Heart left ventricle (tissue), 16 donors: ENCODE measurements at regions of chr7 and their contacts with region 1.

Region 1: DNA sequence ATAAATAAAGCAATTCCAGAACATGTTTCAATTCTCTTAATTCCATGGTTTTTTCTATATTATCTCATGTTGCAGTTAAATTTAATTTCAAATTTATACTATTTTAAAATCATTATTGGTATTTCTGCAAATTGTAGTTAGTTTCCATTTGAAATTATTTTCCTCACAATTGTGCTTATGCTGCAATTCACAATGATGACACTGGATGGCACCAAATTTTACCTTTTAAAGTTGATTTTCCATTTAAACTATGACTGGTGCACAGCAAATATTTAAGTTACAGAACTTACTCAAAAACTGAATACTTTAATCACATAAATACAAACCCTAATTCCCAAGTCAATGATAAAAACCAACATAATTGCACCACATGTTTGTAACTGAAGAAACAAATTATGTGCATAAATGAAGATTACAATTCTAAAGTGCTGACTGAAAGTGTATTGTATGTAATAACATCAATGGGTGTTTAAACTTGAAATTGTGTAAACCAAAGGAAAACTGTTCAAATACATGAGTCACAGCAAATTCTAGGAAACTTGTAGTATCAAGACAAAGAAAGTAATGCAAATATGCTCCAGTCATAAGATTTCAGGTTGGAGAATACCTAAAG is 75.3 kb upstream of the AASS start:
- DNase-seq: no peak
- ATAC-seq: no peak
- H3K4me3 ChIP-seq: no peak overlapping the region
- H3K27ac ChIP-seq: no peak overlapping the region
- H3K4me1 ChIP-seq: no peaks in the 10 kb centered on the region
- H3K27me3 ChIP-seq: no peaks in the 10 kb centered on the region
- CTCF ChIP-seq: peak; percentile 36 to 70 (median 60)
- POLR2A ChIP-seq: no peak

Region 2: DNA sequence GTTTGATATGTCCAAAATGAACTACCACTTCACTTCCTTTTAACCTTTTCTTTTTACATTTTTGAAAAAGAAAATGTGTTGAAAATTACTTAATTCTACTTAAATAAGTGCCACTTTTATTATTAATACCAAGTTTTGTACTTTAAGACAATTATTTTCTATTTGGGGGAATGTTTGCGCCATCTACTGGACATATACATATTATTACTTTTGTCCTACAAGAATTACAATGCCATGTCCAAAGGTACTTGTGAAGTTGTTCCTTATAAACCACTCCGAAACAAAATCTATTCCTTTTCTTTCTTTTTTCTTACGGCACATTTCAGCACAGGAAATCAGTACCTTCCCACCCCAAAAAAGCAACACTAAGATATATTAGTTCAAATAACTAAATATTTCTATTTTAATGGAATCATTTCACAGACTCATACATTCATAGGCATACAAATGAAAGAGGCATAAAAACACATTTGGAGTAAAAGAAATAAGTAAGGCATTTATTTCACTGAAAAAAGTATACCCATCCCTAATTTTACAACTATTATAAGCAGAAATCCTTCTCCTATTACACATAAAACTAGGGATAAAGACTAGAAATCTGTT is 309.6 kb after region 1 on chr7:
- intact Hi-C with region 1: loop called (anchors 2 to 5 kb)
- DNase-seq: no peak
- ATAC-seq: no peak
- H3K4me3 ChIP-seq: no peak overlapping the region
- H3K27ac ChIP-seq: no peak overlapping the region
- H3K4me1 ChIP-seq: no peaks in the 10 kb centered on the region
- H3K27me3 ChIP-seq: no peaks in the 10 kb centered on the region
- CTCF ChIP-seq: peak; percentile 47 to 73 (median 58)
- POLR2A ChIP-seq: no peak